HEK293 (cell line): ENCODE measurements at regions of chr5 and their contacts with region 1.

Region 1: GRCh38 chr5:59380350-59380951 is 513.1 kb downstream of the PDE4D start:
- H3K4me3 ChIP-seq: no peak overlapping the region
- H3K27ac ChIP-seq: no peak overlapping the region
- H3K4me1 ChIP-seq: peaks cover 3% of the 10 kb centered on the region
- CTCF ChIP-seq: peak; percentile 25; the same call in 1 of the 2 replicates

Region 2: GRCh38 chr5:58893551-58893950 is 486.9 kb before region 1 on chr5:
- CTCF ChIA-PET with region 1: interaction called, 13 read pairs
- POLR2A ChIA-PET with region 1: no interaction called
- H3K4me3 ChIP-seq: no peak overlapping the region
- H3K27ac ChIP-seq: no peak overlapping the region
- H3K4me1 ChIP-seq: no peaks in the 10 kb centered on the region; the same call in 1 of the 2 replicates
- CTCF ChIP-seq: no peak

Region 3: GRCh38 chr5:59216841-59217240 is 163.6 kb before region 1 on chr5:
- CTCF ChIA-PET with region 1: interaction called, 20 read pairs
- POLR2A ChIA-PET with region 1: no interaction called
- H3K4me3 ChIP-seq: no peak overlapping the region
- H3K27ac ChIP-seq: no peak overlapping the region
- H3K4me1 ChIP-seq: peaks cover 10% of the 10 kb centered on the region
- CTCF ChIP-seq: no peak